Common myeloid progenitor, CD34-positive (primary cell): ENCODE measurements at regions of chr19 and their contacts with region 1.

Region 1: GRCh38 chr19:19475849-19476828 is 39.2 kb downstream of the TSSK6 start:
- DNase-seq: peak; percentile 57 to 82 (median 75)
- H3K4me3 ChIP-seq: peak overlapping the region in 5 of 7 experiments; percentile 13 to 62 (median 40)
- H3K27ac ChIP-seq: peak overlapping the region; percentile 40 to 79
- H3K4me1 ChIP-seq: peaks cover 9 to 39% (median 36%) of the 10 kb centered on the region in 4 experiments
- H3K27me3 ChIP-seq: no peaks in the 10 kb centered on the region

Region 2: GRCh38 chr19:19366612-19367396 is 109.3 kb before region 1 on chr19:
- CTCF ChIA-PET with region 1: interaction called, 18 read pairs
- POLR2A ChIA-PET with region 1: no interaction called
- DNase-seq: peak; percentile 54 to 65 (median 61)
- H3K4me3 ChIP-seq: peak overlapping the region in 2 of 7 experiments; percentile 22 to 28
- H3K27ac ChIP-seq: no peak overlapping the region
- H3K4me1 ChIP-seq: peaks cover 4 to 15% (median 11%) of the 10 kb centered on the region in 4 experiments
- H3K27me3 ChIP-seq: no peaks in the 10 kb centered on the region

Region 3: GRCh38 chr19:19385108-19385899 is 90.8 kb before region 1 on chr19:
- CTCF ChIA-PET with region 1: interaction called, 11 read pairs
- POLR2A ChIA-PET with region 1: no interaction called
- DNase-seq: peak; percentile 100
- H3K4me3 ChIP-seq: peak overlapping the region; percentile 79 to 95 (median 91)
- H3K27ac ChIP-seq: peak overlapping the region; percentile 95 to 97
- H3K4me1 ChIP-seq: peaks cover 0 to 41% (median 32%) of the 10 kb centered on the region in 4 experiments
- H3K27me3 ChIP-seq: no peaks in the 10 kb centered on the region

Region 4: GRCh38 chr19:19418555-19419260 is 57.4 kb before region 1 on chr19:
- CTCF ChIA-PET with region 1: interaction called, 13 read pairs
- POLR2A ChIA-PET with region 1: no interaction called
- DNase-seq: no peak
- H3K4me3 ChIP-seq: no peak overlapping the region
- H3K27ac ChIP-seq: no peak overlapping the region
- H3K4me1 ChIP-seq: peaks cover 3 to 40% (median 28%) of the 10 kb centered on the region in 4 experiments
- H3K27me3 ChIP-seq: no peaks in the 10 kb centered on the region

Region 5: GRCh38 chr19:19451429-19452242 is 24.5 kb before region 1 on chr19:
- CTCF ChIA-PET with region 1: interaction called, 11 read pairs
- POLR2A ChIA-PET with region 1: interaction called, 3 read pairs
- DNase-seq: peak; percentile 44 to 88 (median 81)
- H3K4me3 ChIP-seq: peak overlapping the region in 3 of 7 experiments; percentile 4 to 48 (median 20)
- H3K27ac ChIP-seq: peak overlapping the region; percentile 13 to 57
- H3K4me1 ChIP-seq: peaks cover 0 to 51% (median 36%) of the 10 kb centered on the region in 4 experiments
- H3K27me3 ChIP-seq: no peaks in the 10 kb centered on the region

Region 6: GRCh38 chr19:19459707-19460251 is 16.4 kb before region 1 on chr19:
- CTCF ChIA-PET with region 1: interaction called, 16 read pairs
- POLR2A ChIA-PET with region 1: interaction called, 9 read pairs
- DNase-seq: peak; percentile 65 to 88 (median 84)
- H3K4me3 ChIP-seq: peak overlapping the region in 5 of 7 experiments; percentile 18 to 66 (median 54)
- H3K27ac ChIP-seq: peak overlapping the region; percentile 26 to 74
- H3K4me1 ChIP-seq: peaks cover 29 to 75% (median 66%) of the 10 kb centered on the region in 4 experiments
- H3K27me3 ChIP-seq: no peaks in the 10 kb centered on the region

Region 7: GRCh38 chr19:19488875-19489690 is 12.9 kb after region 1 on chr19:
- CTCF ChIA-PET with region 1: interaction called, 23 read pairs
- POLR2A ChIA-PET with region 1: no interaction called
- DNase-seq: peak; percentile 90 to 97 (median 96)
- H3K4me3 ChIP-seq: peak overlapping the region in 4 of 7 experiments; percentile 26 to 43 (median 30)
- H3K27ac ChIP-seq: peak overlapping the region; percentile 77 to 90
- H3K4me1 ChIP-seq: peaks cover 4 to 54% (median 45%) of the 10 kb centered on the region in 4 experiments
- H3K27me3 ChIP-seq: no peaks in the 10 kb centered on the region

Region 8: GRCh38 chr19:19782783-19783182 is 306.6 kb after region 1 on chr19:
- CTCF ChIA-PET with region 1: no interaction called
- POLR2A ChIA-PET with region 1: no interaction called
- DNase-seq: no peak
- H3K4me3 ChIP-seq: no peak overlapping the region
- H3K27ac ChIP-seq: no peak overlapping the region
- H3K4me1 ChIP-seq: peaks cover 0 to 2% (median under 1%) of the 10 kb centered on the region in 4 experiments
- H3K27me3 ChIP-seq: no peaks in the 10 kb centered on the region